Activated CD8-positive, alpha-beta T cell treated with anti-CD3 and anti-CD28 coated beads for 36 hours (primary cell): ENCODE measurements at regions of chr3 and their contacts with region 1.

Region 1: DNA sequence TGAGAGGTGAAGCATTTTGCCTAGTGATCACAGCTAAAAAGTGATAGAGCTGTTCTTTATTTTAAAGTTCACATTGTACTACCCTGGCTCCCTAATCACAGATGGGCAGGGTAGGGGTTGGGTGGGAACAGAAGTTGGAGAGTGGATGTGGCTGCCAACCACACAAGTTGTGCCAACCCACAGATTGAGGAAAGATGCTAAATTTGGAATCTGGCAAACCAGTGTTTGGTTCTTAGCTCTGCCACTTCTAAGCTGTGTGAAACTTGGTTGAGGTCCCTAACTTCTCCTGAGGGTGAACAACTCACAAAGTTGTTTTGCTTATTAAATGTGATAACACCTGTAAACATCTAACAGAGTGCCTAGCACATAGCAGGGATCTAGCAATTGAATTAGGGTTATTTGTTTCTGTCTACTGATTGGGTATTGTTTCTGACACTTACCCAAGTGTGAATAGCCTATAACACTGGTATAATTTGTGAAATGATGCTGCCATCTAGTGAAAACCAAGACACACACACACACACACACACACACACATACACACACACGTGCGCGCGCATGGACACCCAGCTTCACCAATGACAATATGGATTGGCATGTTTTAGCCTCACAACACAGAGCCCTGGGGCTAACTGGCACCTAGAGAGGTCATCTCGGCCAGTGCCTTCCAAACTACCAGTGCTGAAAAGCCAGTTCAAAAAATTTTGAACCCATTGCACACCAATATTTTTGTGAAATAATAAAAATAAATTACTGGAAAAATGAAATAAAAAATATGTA is 25.3 kb downstream of the ADGRG7 start:
- DNase-seq: peak; percentile 74
- ATAC-seq: peak; percentile 81
- H3K4me3 Mint-ChIP-seq: no peak overlapping the region
- H3K27ac Mint-ChIP-seq: peak overlapping the region; percentile 44
- H3K4me1 Mint-ChIP-seq: peaks cover 11% of the 10 kb centered on the region
- H3K27me3 Mint-ChIP-seq: peaks cover 1% of the 10 kb centered on the region
- CTCF ChIP-seq: no peak

Region 2: DNA sequence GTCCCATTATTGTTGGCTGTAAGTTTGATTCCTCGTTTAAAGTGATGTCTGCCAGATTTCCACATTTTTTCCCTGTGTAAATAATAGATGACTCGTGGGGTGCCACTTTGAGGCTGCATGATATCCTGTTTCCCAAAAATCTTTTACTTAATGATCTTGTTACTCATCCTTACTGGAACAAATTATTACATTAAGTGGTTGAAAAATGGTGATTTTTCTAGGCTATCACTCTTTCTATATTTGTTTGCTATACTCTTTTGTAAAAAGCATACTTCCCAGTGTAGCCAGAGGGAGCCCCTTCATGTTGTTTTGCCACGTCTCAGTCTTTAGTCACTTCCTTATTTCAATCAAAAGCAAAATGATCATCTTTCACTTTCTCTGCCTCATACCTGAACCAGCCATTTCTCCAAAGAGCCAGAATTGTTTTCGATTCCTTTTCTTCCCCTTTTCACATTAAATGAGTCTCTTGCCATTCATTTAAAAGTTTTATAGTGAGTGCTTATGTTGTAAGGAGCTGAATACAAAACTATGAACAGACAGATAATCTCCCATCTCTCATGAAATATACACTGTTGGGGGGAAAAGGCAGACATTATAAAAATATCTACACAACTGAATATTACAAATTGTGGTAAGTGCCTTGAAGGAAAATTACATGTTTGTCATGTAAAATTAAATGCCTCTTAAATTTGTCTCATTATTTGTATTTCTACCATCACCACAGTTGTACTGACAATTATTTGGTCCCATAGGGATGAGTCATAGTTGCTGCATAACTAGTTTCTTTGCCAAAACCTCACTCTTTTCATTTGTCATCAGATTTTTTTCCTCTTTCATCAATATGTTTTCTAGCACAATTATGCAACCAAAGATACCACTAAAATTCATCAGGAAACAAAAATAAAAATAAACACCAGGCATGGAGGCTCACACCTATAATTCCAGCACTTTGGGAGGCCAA is 16.2 kb after region 1 on chr3:
- CTCF ChIA-PET with region 1: interaction called, 11 read pairs
- POLR2A ChIA-PET with region 1: interaction called, 3 read pairs
- intact Hi-C with region 1: no loop called
- DNase-seq: peak; percentile 60
- ATAC-seq: peak; percentile 99
- H3K4me3 Mint-ChIP-seq: peak overlapping the region; percentile 39
- H3K27ac Mint-ChIP-seq: peak overlapping the region; percentile 89
- H3K4me1 Mint-ChIP-seq: peaks cover 20% of the 10 kb centered on the region
- H3K27me3 Mint-ChIP-seq: no peaks in the 10 kb centered on the region
- CTCF ChIP-seq: peak; percentile 69